ENCODE measurements at regions of chr19 and their contacts with region 1.

Region 1: GRCh38 chr19:46614114-46614722 is 10.7 kb downstream of the PTGIR start:
- DNase-seq: peak; percentile 92
- H3K4me3 ChIP-seq: no peak overlapping the region
- H3K27ac ChIP-seq: peak overlapping the region in 1 of 4 donors; percentile 3
- H3K4me1 ChIP-seq: peaks cover 0 to 22% (median 17%) of the 10 kb centered on the region in 4 donors
- H3K27me3 ChIP-seq: no peaks in the 10 kb centered on the region
- CTCF ChIP-seq: peak; percentile 67 to 92 (median 90)
- EP300 ChIP-seq: no peak
- POLR2A ChIP-seq: no peak

Region 2: DNA sequence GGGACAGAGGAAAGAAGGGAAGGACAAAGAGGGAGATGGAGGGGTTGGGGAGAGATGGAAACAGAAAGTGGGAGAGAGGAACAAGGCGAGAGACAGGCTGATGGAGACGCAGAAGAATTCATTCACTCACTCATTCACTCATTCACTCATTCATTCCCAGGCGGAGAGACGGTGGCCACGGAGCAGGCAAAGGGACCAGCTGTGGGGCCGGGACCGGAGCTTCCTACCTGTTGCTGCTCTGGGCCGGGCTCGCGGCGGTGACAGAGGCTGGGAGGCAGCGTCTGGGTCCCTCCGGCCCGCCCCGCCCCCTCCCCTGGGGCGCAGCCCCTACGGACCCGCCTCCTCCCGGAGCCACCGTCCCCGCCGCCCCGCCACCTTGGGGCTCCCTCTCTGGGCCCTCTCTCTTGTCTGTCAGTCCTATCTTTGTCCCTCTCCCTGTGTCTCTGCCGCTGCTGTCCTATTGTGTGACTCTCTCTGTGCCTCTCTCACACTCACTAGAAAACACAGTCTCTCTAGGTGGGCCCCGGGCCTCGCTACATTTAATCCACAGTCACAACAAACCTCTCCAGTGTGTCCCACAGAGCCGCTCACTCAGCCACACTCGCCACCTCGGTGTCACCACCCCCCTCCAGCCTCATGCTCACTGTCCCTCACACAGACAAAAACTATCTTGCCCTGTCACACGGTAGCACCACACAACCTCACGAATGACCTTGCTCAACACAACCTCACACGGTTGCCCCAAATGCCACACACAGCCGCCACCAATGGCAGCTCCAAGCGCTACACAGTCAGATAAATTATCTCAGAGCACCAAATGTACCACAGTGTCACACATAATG is 21.9 kb after region 1 on chr19 and contains the start of gene GNG8:
- intact Hi-C with region 1: loop called (anchors 2 kb)
- DNase-seq: no peak
- H3K4me3 ChIP-seq: no peak within 1 kb of the TSS
- H3K27ac ChIP-seq: peak within 1 kb of the TSS in 1 of 4 donors; percentile 11
- H3K4me1 ChIP-seq: peaks cover 0 to 49% (median 43%) of the 10 kb centered on the region in 4 donors
- H3K27me3 ChIP-seq: no peaks in the 10 kb centered on the region
- CTCF ChIP-seq: no peak
- EP300 ChIP-seq: no peak
- POLR2A ChIP-seq: no peak
- total RNA-seq, gene GNG8: not detected

Region 3: GRCh38 chr19:46661735-46662592 is 47.7 kb after region 1 on chr19:
- intact Hi-C with region 1: loop called (anchors 1 kb)
- DNase-seq: peak; percentile 95
- H3K4me3 ChIP-seq: peak overlapping the region in 3 of 4 donors; percentile 25 to 93 (median 41)
- H3K27ac ChIP-seq: peak overlapping the region; percentile 80 to 90 (median 88)
- H3K4me1 ChIP-seq: peaks cover 0 to 37% (median 24%) of the 10 kb centered on the region in 4 donors
- H3K27me3 ChIP-seq: no peaks in the 10 kb centered on the region
- CTCF ChIP-seq: peak; percentile 89 to 95 (median 92)
- EP300 ChIP-seq: no peak
- POLR2A ChIP-seq: no peak

Region 4: GRCh38 chr19:46704379-46705076 is 90.3 kb after region 1 on chr19:
- intact Hi-C with region 1: no loop called
- DNase-seq: peak; percentile 85
- H3K4me3 ChIP-seq: no peak overlapping the region
- H3K27ac ChIP-seq: no peak overlapping the region
- H3K4me1 ChIP-seq: no peaks in the 10 kb centered on the region
- H3K27me3 ChIP-seq: no peaks in the 10 kb centered on the region
- CTCF ChIP-seq: peak; percentile 82 to 97 (median 90)
- EP300 ChIP-seq: no peak
- POLR2A ChIP-seq: no peak

Region 5: GRCh38 chr19:46975925-46976782 is 361.9 kb after region 1 on chr19:
- intact Hi-C with region 1: no loop called
- DNase-seq: peak; percentile 98
- H3K4me3 ChIP-seq: peak overlapping the region in 1 of 4 donors; percentile 6
- H3K27ac ChIP-seq: peak overlapping the region; percentile 79 to 92 (median 84)
- H3K4me1 ChIP-seq: peaks cover 0 to 71% (median 51%) of the 10 kb centered on the region in 4 donors
- H3K27me3 ChIP-seq: no peaks in the 10 kb centered on the region
- CTCF ChIP-seq: no peak
- EP300 ChIP-seq: peak in 1 of 4 donors; percentile 50
- POLR2A ChIP-seq: no peak